ENCODE measurements at regions of chr11 and their contacts with region 1.

Region 1: GRCh38 chr11:11841723-11842420 is at the start of gene USP47:
- DNase-seq: peak; percentile 92
- H3K4me3 Mint-ChIP-seq: no peak within 1 kb of the TSS
- H3K27ac Mint-ChIP-seq: peak within 1 kb of the TSS; percentile 64
- H3K4me1 Mint-ChIP-seq: peaks cover 5% of the 10 kb centered on the region
- H3K27me3 Mint-ChIP-seq: peaks cover 18% of the 10 kb centered on the region
- total RNA-seq, gene USP47: 52.1 and 55.8 TPM in 2 replicates

Region 2: GRCh38 chr11:10808553-10809372 is 1033.1 kb before region 1 on chr11 and contains the start of gene EIF4G2:
- intact Hi-C with region 1: loop called (anchors 1 kb)
- DNase-seq: peak; percentile 98
- H3K4me3 Mint-ChIP-seq: peak within 1 kb of the TSS; percentile 94
- H3K27ac Mint-ChIP-seq: peak within 1 kb of the TSS; percentile 98
- H3K4me1 Mint-ChIP-seq: peaks cover 33% of the 10 kb centered on the region
- H3K27me3 Mint-ChIP-seq: peaks cover 2% of the 10 kb centered on the region
- total RNA-seq, gene EIF4G2: 1,057 and 1,120 TPM in 2 replicates

Region 3: GRCh38 chr11:11621573-11622319 is 220.1 kb before region 1 on chr11 and contains the start of gene GALNT18:
- intact Hi-C with region 1: loop called (anchors 5 kb)
- DNase-seq: peak; percentile 83
- H3K4me3 Mint-ChIP-seq: peak within 1 kb of the TSS; percentile 82
- H3K27ac Mint-ChIP-seq: peak within 1 kb of the TSS; percentile 59
- H3K4me1 Mint-ChIP-seq: peaks cover 8% of the 10 kb centered on the region
- H3K27me3 Mint-ChIP-seq: peaks cover 63% of the 10 kb centered on the region
- total RNA-seq, gene GALNT18: 5.0 and 5.5 TPM in 2 replicates

Region 4: GRCh38 chr11:11856638-11857037 is 14.8 kb after region 1 on chr11:
- intact Hi-C with region 1: loop called (anchors 1 kb)
- DNase-seq: no peak
- H3K4me3 Mint-ChIP-seq: no peak overlapping the region
- H3K27ac Mint-ChIP-seq: no peak overlapping the region
- H3K4me1 Mint-ChIP-seq: peaks cover 32% of the 10 kb centered on the region
- H3K27me3 Mint-ChIP-seq: no peaks in the 10 kb centered on the region

Region 5: GRCh38 chr11:12159351-12160099 is 317.7 kb after region 1 on chr11:
- intact Hi-C with region 1: loop called (anchors 10 kb)
- DNase-seq: no peak
- H3K4me3 Mint-ChIP-seq: peak overlapping the region; percentile 18
- H3K27ac Mint-ChIP-seq: peak overlapping the region; percentile 82
- H3K4me1 Mint-ChIP-seq: peaks cover 88% of the 10 kb centered on the region
- H3K27me3 Mint-ChIP-seq: no peaks in the 10 kb centered on the region